ENCODE measurements at regions of chr5 and their contacts with region 1.

Region 1: GRCh38 chr5:172973127-172973916 is 10.2 kb upstream of the ATP6V0E1 start:
- DNase-seq: no peak
- H3K27ac ChIP-seq: no peak overlapping the region
- CTCF ChIP-seq: no peak

Region 2: DNA sequence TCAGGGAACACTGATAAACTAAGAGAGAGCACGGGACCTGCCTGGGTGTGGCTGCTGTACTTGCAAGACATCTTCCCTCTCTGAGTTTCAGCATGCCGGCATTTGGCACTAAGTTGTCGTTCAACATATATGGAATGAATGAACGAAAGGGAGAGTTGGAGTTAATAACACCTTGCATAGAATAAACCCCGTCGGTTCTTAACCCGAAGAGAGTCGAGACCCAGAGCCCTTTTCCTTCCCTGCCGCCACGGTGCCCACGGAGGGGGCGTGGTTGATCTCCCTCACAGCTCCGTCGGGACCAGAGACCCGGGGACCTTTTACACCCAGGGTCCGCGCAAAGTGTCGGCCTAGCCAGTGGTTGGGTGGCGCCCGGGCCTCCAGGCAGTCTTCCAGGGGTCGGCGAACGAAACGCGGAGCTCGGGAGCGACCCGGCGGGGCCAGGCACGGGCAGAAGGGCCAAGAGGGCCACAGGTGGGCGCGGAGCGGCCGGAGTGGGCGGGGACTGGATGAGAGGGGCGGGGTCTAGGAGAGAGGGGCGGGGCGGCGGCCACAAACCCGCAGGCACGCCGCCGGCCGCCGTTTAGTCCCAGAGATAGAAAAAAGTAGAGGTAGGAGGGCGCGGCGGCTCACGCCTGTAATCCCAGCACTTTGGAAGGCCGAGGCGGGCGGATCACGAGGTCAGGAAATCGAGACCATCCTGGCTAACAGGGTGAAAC is 14.8 kb before region 1 on chr5:
- CTCF ChIA-PET with region 1: interaction called, 10 read pairs
- POLR2A ChIA-PET with region 1: interaction called, 5 read pairs
- DNase-seq: peak; percentile 95
- H3K27ac ChIP-seq: peak overlapping the region; percentile 86
- CTCF ChIP-seq: no peak

Region 3: GRCh38 chr5:173051746-173052145 is 78.4 kb after region 1 on chr5:
- CTCF ChIA-PET with region 1: no interaction called
- POLR2A ChIA-PET with region 1: no interaction called
- DNase-seq: no peak
- H3K27ac ChIP-seq: no peak overlapping the region
- CTCF ChIP-seq: no peak

Measured in RWPE1 (cell line).